PC-9 (cell line): ENCODE measurements at regions of chr2 and their contacts with region 1.

Region 1: GRCh38 chr2:224650815-224651439 is 65.2 kb downstream of the CCDC195 start:
- DNase-seq: peak; percentile 43 to 75
- H3K4me3 ChIP-seq: no peak overlapping the region
- H3K27ac ChIP-seq: no peak overlapping the region
- H3K4me1 ChIP-seq: peaks cover 6% of the 10 kb centered on the region
- H3K27me3 ChIP-seq: no peaks in the 10 kb centered on the region
- CTCF ChIP-seq: peak; percentile 100

Region 2: GRCh38 chr2:224357098-224357901 is 293.6 kb before region 1 on chr2:
- CTCF ChIA-PET with region 1: interaction called, 3 read pairs
- POLR2A ChIA-PET with region 1: no interaction called
- intact Hi-C with region 1: loop called (anchors 1 kb)
- DNase-seq: peak; percentile 72 to 77
- H3K4me3 ChIP-seq: no peak overlapping the region
- H3K27ac ChIP-seq: no peak overlapping the region
- H3K4me1 ChIP-seq: peaks cover 16% of the 10 kb centered on the region
- H3K27me3 ChIP-seq: no peaks in the 10 kb centered on the region
- CTCF ChIP-seq: peak; percentile 100

Region 3: GRCh38 chr2:224449212-224450147 is 201.4 kb before region 1 on chr2:
- CTCF ChIA-PET with region 1: interaction called, 5 read pairs
- POLR2A ChIA-PET with region 1: no interaction called
- intact Hi-C with region 1: loop called (anchors 2 kb)
- DNase-seq: peak; percentile 24 to 50
- H3K4me3 ChIP-seq: no peak overlapping the region
- H3K27ac ChIP-seq: no peak overlapping the region
- H3K4me1 ChIP-seq: 0 out of 2 replicates have a peak, but pooled peaks cover 3% of the 10 kb centered on the region
- H3K27me3 ChIP-seq: no peaks in the 10 kb centered on the region
- CTCF ChIP-seq: peak; percentile 85

Region 4: GRCh38 chr2:224507789-224508188 is 143.1 kb before region 1 on chr2:
- CTCF ChIA-PET with region 1: no interaction called
- POLR2A ChIA-PET with region 1: no interaction called
- intact Hi-C with region 1: loop called (anchors 5 kb)
- DNase-seq: no peak
- H3K4me3 ChIP-seq: no peak overlapping the region
- H3K27ac ChIP-seq: no peak overlapping the region
- H3K4me1 ChIP-seq: no peaks in the 10 kb centered on the region
- H3K27me3 ChIP-seq: no peaks in the 10 kb centered on the region
- CTCF ChIP-seq: no peak

Region 5: DNA sequence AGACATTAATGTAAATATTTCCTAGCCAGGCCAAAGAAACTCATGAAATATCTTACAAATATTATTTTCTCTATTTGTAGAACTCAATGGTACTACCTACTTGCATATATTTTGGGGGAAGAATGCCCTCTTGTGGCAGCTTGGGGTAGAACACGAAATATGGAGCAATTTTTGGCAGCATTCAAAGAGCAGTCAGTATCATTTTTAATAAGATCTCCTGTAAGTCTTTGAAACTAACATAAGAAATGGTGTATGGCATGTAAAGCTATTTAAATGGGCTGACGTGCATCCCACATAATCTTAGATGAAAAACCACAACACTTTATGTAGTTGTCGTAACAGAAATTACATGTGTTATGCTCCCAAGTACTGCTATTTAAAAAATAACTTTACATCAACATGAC is 127.5 kb after region 1 on chr2:
- CTCF ChIA-PET with region 1: no interaction called
- POLR2A ChIA-PET with region 1: interaction called, 3 read pairs
- intact Hi-C with region 1: loop called (anchors 2 kb)
- DNase-seq: peak; percentile 67 to 75
- H3K4me3 ChIP-seq: no peak overlapping the region
- H3K27ac ChIP-seq: no peak overlapping the region
- H3K4me1 ChIP-seq: peaks cover 2% of the 10 kb centered on the region
- H3K27me3 ChIP-seq: no peaks in the 10 kb centered on the region
- CTCF ChIP-seq: peak; percentile 99